ENCODE measurements at regions of chr17 and their contacts with region 1.

Region 1: GRCh38 chr17:65137021-65137991 is at the start of gene RGS9:
- DNase-seq: peak; percentile 89 to 94 (median 92)
- ATAC-seq: peak; percentile 99
- H3K4me3 ChIP-seq: peak within 1 kb of the TSS; percentile 24
- H3K27ac ChIP-seq: no peak within 1 kb of the TSS
- H3K4me1 ChIP-seq: peaks cover 7 to 10% of the 10 kb centered on the region in 2 experiments; a peak in 4 of 5 replicates
- H3K27me3 ChIP-seq: peaks cover 20 to 41% of the 10 kb centered on the region in 2 experiments
- CTCF ChIP-seq: peak; percentile 90 to 95 (median 93)
- EP300 ChIP-seq: no peak
- POLR2A ChIP-seq: no peak
- RAD21 ChIP-seq: peak; percentile 83
- polyA plus RNA-seq, gene RGS9: 0.38 to 0.55 TPM

Region 2: GRCh38 chr17:65173284-65173793 is 36.0 kb after region 1 on chr17:
- CTCF ChIA-PET with region 1: no interaction called
- POLR2A ChIA-PET with region 1: no interaction called
- in situ Hi-C with region 1: no loop called
- intact Hi-C with region 1: loop called (anchors 5 kb)
- DNase-seq: peak; percentile 88 to 96 (median 90)
- ATAC-seq: peak; percentile 94
- H3K4me3 ChIP-seq: no peak overlapping the region
- H3K27ac ChIP-seq: peak overlapping the region; percentile 68
- H3K4me1 ChIP-seq: peaks cover 23 to 43% of the 10 kb centered on the region in 2 experiments
- H3K27me3 ChIP-seq: no peaks in the 10 kb centered on the region; a peak in 1 of 5 replicates
- CTCF ChIP-seq: peak in 1 of 3 experiments; percentile 10; a peak in 2 of 6 replicates
- EP300 ChIP-seq: peak; percentile 78; the same call in 1 of the 2 replicates
- POLR2A ChIP-seq: peak; percentile 61; the same call in 1 of the 2 replicates
- RAD21 ChIP-seq: 0 out of 4 replicates have a peak, but pooled peaks of 1 of the 2 experiments have one; percentile 37